Activated CD4-positive, alpha-beta T cell treated with anti-CD3 and anti-CD28 coated beads, Interleukin-2, amount 10 ng/mL, durations not matched to agents 24 days and 14 days (primary cell): ENCODE measurements at regions of chr10 and their contacts with region 1.

Region 1: GRCh38 chr10:49407552-49408137 is 11.8 kb upstream of the DRGX start:
- DNase-seq: peak; percentile 92
- H3K4me3 Mint-ChIP-seq: no peak overlapping the region
- H3K27ac Mint-ChIP-seq: no peak overlapping the region
- H3K4me1 Mint-ChIP-seq: peaks cover 2% of the 10 kb centered on the region
- H3K27me3 Mint-ChIP-seq: peaks cover 28% of the 10 kb centered on the region

Region 2: GRCh38 chr10:49512121-49512809 is 104.6 kb after region 1 on chr10:
- intact Hi-C with region 1: loop called (anchors 1 kb)
- DNase-seq: peak; percentile 72
- H3K4me3 Mint-ChIP-seq: no peak overlapping the region
- H3K27ac Mint-ChIP-seq: no peak overlapping the region
- H3K4me1 Mint-ChIP-seq: peaks cover 14% of the 10 kb centered on the region
- H3K27me3 Mint-ChIP-seq: peaks cover 13% of the 10 kb centered on the region

Region 3: DNA sequence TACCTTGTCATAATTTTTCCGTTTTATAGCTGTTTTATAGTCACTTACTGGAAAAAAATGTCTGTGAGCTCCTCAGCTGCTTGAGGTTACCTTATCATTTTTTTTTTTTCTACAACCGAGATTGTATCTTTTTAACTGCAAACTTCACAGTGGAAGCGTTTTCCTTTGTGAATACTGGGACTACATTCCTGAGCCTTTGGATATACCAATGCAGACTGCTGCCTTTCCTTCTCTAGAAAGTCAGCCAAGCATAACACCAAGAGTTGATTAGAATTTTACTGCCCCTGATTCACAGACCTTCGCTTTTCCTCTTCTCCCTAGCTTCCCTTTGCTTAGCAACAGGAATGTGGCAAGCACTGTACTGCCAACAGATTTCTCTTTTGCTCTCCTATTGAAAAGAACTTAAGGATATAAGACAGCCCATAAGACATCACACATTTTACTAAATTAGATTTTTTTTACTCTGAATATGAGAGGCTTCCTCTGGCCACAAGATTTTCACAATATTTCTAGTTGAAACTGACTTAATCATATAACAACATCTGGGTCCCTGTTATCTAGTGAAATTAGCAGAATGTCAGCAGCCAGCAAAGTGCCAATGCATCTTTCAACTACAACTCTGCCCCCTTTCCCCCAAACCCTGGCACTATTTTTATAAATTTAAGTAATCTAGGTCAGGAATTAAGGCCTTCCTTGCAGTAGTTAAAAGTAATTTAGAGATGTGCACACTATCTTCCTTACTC is 1837.3 kb after region 1 on chr10:
- intact Hi-C with region 1: no loop called
- DNase-seq: no peak
- H3K4me3 Mint-ChIP-seq: no peak overlapping the region
- H3K27ac Mint-ChIP-seq: no peak overlapping the region
- H3K4me1 Mint-ChIP-seq: no peaks in the 10 kb centered on the region
- H3K27me3 Mint-ChIP-seq: peaks cover 1% of the 10 kb centered on the region